Activated CD4-positive, alpha-beta T cell treated with anti-CD3 and anti-CD28 coated beads, Interleukin-2, amount 10 ng/mL, durations not matched to agents 7 days and 5 days (primary cell): ENCODE measurements at regions of chr18 and their contacts with region 1.

Region 1: GRCh38 chr18:23259701-23260582 is 124.7 kb downstream of the CABLES1 start:
- DNase-seq: peak; percentile 16
- H3K4me3 Mint-ChIP-seq: no peak overlapping the region
- H3K27ac Mint-ChIP-seq: peak overlapping the region; percentile 52
- H3K4me1 Mint-ChIP-seq: peaks cover 41% of the 10 kb centered on the region
- H3K27me3 Mint-ChIP-seq: no peaks in the 10 kb centered on the region

Region 2: GRCh38 chr18:23270986-23271680 is 11.2 kb after region 1 on chr18:
- CTCF ChIA-PET with region 1: interaction called, 14 read pairs
- POLR2A ChIA-PET with region 1: no interaction called
- DNase-seq: no peak
- H3K4me3 Mint-ChIP-seq: no peak overlapping the region
- H3K27ac Mint-ChIP-seq: no peak overlapping the region
- H3K4me1 Mint-ChIP-seq: peaks cover 33% of the 10 kb centered on the region
- H3K27me3 Mint-ChIP-seq: no peaks in the 10 kb centered on the region